Heart right ventricle (tissue), 16 donors: ENCODE measurements at regions of chr1 and their contacts with region 1.

Region 1: GRCh38 chr1:8848663-8849386 is 29.7 kb downstream of the ENO1 start:
- DNase-seq: peak; percentile 89 to 94
- ATAC-seq: peak; percentile 93 to 99 (median 98)
- H3K4me3 ChIP-seq: peak overlapping the region in 1 of 10 donors; percentile 19
- H3K27ac ChIP-seq: peak overlapping the region in 9 of 10 donors; percentile 1 to 52 (median 38)
- H3K4me1 ChIP-seq: peaks cover 3 to 39% (median 27%) of the 10 kb centered on the region in 9 donors
- H3K27me3 ChIP-seq: no peaks in the 10 kb centered on the region
- CTCF ChIP-seq: peak; percentile 89 to 98 (median 93)

Region 2: DNA sequence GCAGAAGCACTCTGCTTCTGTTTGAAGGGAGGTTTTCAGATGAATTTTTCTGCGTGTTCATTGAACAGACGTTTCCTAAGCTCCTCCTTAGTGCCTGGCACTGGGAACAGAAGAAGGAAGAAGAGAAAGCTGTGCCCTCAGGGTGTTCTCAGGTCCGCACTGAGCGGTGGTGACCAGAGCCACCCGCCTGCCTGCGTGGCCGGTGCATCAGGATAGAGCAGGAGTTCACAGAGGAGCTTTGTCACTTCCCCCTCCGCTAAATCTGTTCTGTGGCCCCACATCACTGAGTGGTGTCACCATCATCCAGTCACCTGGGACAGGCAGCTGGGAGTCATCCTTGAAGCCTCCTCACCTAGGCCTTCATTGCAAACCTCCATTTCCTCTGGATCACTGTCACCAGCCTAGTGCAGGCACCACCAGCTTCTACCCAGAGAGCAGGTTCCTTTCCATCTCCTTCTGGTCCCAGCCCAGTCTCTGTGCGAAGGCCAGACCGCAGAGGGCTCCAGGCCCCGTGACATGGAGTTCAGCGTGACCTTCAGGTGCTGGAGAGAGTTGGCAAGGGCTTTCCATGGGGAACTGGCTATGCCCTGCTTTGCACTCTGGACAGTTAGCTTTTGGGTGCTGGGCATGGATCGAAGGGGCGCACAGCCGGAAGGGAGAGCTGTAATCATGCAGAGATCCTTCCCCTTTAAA is 865.6 kb before region 1 on chr1:
- intact Hi-C with region 1: loop called in 2 of 10 experiments (anchors 5 to 10 kb)
- DNase-seq: peak in 1 of 2 donors; percentile 7
- ATAC-seq: peak in 6 of 8 donors; percentile 54 to 71 (median 68)
- H3K4me3 ChIP-seq: no peak overlapping the region
- H3K27ac ChIP-seq: peak overlapping the region in 1 of 10 donors; percentile 4
- H3K4me1 ChIP-seq: peaks cover 0 to 26% (median 15%) of the 10 kb centered on the region in 9 donors
- H3K27me3 ChIP-seq: no peaks in the 10 kb centered on the region
- CTCF ChIP-seq: no peak

Region 3: GRCh38 chr1:7989762-7990428 is 858.9 kb before region 1 on chr1:
- intact Hi-C with region 1: loop called in 1 of 10 experiments (anchors 10 kb)
- DNase-seq: no peak
- ATAC-seq: peak in 3 of 8 donors; percentile 22 to 64 (median 46)
- H3K4me3 ChIP-seq: no peak overlapping the region
- H3K27ac ChIP-seq: no peak overlapping the region
- H3K4me1 ChIP-seq: peaks cover 0 to 8% (median 0%) of the 10 kb centered on the region in 9 donors
- H3K27me3 ChIP-seq: no peaks in the 10 kb centered on the region
- CTCF ChIP-seq: no peak

Region 4: DNA sequence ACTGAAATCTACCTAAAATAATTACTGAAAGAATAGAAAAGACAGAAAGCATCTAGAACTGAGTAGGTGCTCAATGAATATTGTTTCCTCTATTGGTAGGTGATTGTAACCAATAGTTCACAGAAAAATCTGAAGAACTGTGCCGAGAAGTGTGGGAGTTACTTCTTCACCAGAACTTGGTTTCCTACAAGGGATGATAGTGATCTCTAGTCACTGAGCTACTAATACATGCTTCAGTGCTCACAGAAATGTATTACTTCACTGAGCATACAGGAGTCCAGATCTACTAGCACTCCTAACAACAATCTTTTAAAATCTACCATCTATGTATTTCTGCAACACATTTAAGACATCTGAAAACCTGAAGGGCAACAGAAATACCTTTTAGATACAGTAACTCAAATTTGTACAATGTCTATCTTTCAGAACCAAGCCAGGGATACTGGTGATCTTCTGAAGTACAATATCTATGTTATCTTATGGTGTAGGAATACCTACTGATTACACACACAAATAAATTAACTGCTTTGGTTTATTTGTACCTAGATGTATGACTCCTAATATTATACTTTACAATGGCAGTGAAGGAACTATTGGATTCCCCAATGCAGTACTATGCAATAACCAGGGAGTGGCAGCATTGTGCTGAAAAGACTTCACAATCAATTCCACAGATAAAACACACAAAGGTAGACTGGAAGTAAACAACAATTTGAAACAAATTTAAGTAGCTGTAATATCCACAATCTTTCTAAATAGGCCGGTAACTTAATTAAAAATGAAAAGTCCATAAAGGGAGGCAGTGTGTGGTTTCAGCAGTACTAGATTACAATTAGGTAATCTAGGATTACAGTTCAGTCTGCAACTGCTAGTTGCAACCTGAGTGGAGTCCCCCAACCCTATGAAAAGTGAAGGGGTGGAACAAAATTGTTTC is 287.9 kb before region 1 on chr1:
- intact Hi-C with region 1: loop called in 7 of 10 experiments (anchors 1 to 10 kb)
- DNase-seq: no peak
- ATAC-seq: peak in 7 of 8 donors; percentile 50 to 80 (median 72)
- H3K4me3 ChIP-seq: no peak overlapping the region
- H3K27ac ChIP-seq: no peak overlapping the region
- H3K4me1 ChIP-seq: peaks cover 0 to 33% (median 16%) of the 10 kb centered on the region in 9 donors
- H3K27me3 ChIP-seq: no peaks in the 10 kb centered on the region
- CTCF ChIP-seq: peak; percentile 82 to 98 (median 94)

Region 5: GRCh38 chr1:8727809-8728213 is 121.0 kb before region 1 on chr1:
- intact Hi-C with region 1: loop called in 4 of 10 experiments (anchors 5 to 10 kb)
- DNase-seq: peak; percentile 36 to 41
- ATAC-seq: peak in 7 of 8 donors; percentile 37 to 74 (median 63)
- H3K4me3 ChIP-seq: no peak overlapping the region
- H3K27ac ChIP-seq: no peak overlapping the region
- H3K4me1 ChIP-seq: peaks cover 0 to 30% (median 8%) of the 10 kb centered on the region in 9 donors
- H3K27me3 ChIP-seq: no peaks in the 10 kb centered on the region
- CTCF ChIP-seq: no peak

Region 6: DNA sequence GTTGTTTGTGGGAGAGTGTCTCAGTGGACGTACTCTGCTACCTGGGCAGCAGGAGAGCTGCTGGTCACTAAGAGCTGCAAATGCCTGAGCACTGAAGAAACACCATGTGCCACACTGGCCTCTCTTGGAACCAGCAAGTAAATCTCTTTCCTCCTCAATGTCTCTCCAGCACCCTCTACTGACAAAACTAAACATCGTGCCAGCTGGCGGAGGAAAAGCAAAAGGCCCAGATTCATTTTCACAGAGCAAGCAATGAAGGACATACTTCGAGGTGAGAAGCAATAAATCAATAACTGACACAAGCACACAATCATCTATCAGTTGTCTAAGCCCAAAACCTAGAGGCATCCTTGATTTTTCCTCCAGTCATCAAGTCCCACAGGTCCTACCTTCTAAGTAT is 109.4 kb before region 1 on chr1:
- intact Hi-C with region 1: loop called in 1 of 10 experiments (anchors 5 kb)
- DNase-seq: no peak
- ATAC-seq: no peak
- H3K4me3 ChIP-seq: no peak overlapping the region
- H3K27ac ChIP-seq: no peak overlapping the region
- H3K4me1 ChIP-seq: peaks cover 0 to 15% (median 5%) of the 10 kb centered on the region in 9 donors
- H3K27me3 ChIP-seq: no peaks in the 10 kb centered on the region
- CTCF ChIP-seq: no peak

Region 7: GRCh38 chr1:8754993-8755392 is 93.8 kb before region 1 on chr1:
- intact Hi-C with region 1: loop called in 1 of 10 experiments (anchors 10 kb)
- DNase-seq: no peak
- ATAC-seq: no peak
- H3K4me3 ChIP-seq: no peak overlapping the region
- H3K27ac ChIP-seq: no peak overlapping the region
- H3K4me1 ChIP-seq: peaks cover 0 to 32% (median 6%) of the 10 kb centered on the region in 9 donors
- H3K27me3 ChIP-seq: no peaks in the 10 kb centered on the region
- CTCF ChIP-seq: no peak

Region 8: GRCh38 chr1:9004700-9005394 is 156.0 kb after region 1 on chr1:
- intact Hi-C with region 1: no loop called
- DNase-seq: peak; percentile 71 to 82
- ATAC-seq: peak; percentile 7 to 88 (median 81)
- H3K4me3 ChIP-seq: no peak overlapping the region
- H3K27ac ChIP-seq: no peak overlapping the region
- H3K4me1 ChIP-seq: peaks cover 0 to 8% (median 0%) of the 10 kb centered on the region in 9 donors
- H3K27me3 ChIP-seq: no peaks in the 10 kb centered on the region
- CTCF ChIP-seq: peak; percentile 75 to 98 (median 96)